Keratinocyte (primary cell): ENCODE measurements at regions of chr2 and their contacts with region 1.

Region 1: GRCh38 chr2:99933913-99934650 is 208.3 kb downstream of the AFF3 start:
- DNase-seq: no peak
- H3K4me3 ChIP-seq: no peak overlapping the region
- H3K27ac ChIP-seq: no peak overlapping the region
- H3K4me1 ChIP-seq: no peaks in the 10 kb centered on the region
- H3K27me3 ChIP-seq: no peaks in the 10 kb centered on the region
- CTCF ChIP-seq: no peak

Region 2: DNA sequence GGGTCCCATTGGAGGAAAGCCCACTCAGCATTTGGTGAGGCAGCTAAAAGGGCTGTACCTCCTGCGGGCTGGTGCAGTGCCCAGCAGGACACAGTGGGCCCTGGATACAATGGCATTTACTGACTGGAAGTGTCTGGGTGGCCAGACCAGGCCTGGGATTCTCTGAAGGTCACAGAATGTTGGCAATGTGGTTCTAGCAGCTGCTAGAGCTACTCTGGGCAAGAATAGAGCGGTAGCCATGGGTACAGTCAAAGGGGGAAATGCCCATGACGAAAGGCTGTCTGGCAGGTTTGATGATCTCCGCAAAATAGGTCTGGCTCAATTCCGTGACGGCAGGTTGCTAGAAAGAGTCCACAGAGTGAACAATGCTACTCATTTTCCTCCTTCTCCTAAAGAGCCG is 33.5 kb before region 1 on chr2:
- dilution Hi-C with region 1: no loop called
- DNase-seq: no peak
- H3K4me3 ChIP-seq: no peak overlapping the region
- H3K27ac ChIP-seq: no peak overlapping the region
- H3K4me1 ChIP-seq: no peaks in the 10 kb centered on the region
- H3K27me3 ChIP-seq: no peaks in the 10 kb centered on the region
- CTCF ChIP-seq: no peak

Region 3: GRCh38 chr2:99974275-99974674 is 40.2 kb after region 1 on chr2:
- dilution Hi-C with region 1: loop called (anchors 5 kb)
- DNase-seq: no peak
- H3K4me3 ChIP-seq: no peak overlapping the region
- H3K27ac ChIP-seq: no peak overlapping the region
- H3K4me1 ChIP-seq: no peaks in the 10 kb centered on the region
- H3K27me3 ChIP-seq: no peaks in the 10 kb centered on the region
- CTCF ChIP-seq: no peak